K562 (cell line): ENCODE measurements at regions of chr1 and their contacts with region 1.

Region 1: DNA sequence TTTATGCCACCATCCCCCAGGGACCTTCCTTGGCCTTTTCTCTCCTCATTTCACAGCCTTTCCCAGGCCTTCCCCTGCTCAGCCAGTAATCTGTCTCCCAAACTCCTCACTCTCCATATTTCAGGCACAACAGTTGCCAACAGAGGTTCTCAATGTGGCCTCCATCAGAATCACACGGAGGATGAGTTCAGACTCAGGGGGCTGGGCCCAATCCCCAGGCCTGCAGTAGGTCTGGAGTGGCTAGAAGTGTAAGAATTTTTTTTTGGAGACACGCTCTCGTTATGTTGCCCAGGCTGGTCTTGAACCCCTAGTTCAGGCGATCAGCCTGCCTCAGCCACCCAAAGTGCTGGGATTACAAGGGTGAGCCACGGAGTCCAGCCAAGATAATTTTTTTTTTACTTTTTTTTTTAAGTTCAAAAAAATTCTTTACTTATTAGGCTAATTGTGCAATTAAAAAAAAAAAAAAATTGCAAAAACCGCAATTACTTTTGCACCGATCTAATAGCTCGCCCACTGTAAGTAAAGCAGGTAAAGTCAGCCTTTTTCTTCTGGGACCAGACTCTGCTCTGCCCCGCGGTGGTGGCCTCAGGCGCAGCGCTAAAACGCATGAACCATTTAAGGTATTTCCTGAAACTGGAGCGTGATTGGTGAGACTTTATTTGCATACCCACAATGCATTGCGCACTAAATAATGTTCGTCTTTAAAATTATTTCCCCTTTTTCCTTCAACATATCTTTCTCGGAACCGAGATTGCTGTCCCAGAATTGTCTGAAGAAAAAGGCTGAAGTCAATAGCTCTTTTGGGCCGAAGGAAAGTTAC is 18.7 kb downstream of the KIAA2013 start:
- DNase-seq: peak; percentile 86 to 98 (median 90)
- ATAC-seq: peak; percentile 72
- H3K4me3 ChIP-seq: no peak overlapping the region
- H3K27ac ChIP-seq: peak overlapping the region; percentile 100
- H3K4me1 ChIP-seq: peaks cover 15 to 27% of the 10 kb centered on the region in 2 experiments
- H3K27me3 ChIP-seq: no peaks in the 10 kb centered on the region
- CTCF ChIP-seq: peak; percentile 87 to 98 (median 96)
- EP300 ChIP-seq: no peak
- POLR2A ChIP-seq: no peak
- RAD21 ChIP-seq: peak; percentile 61 to 78

Region 2: DNA sequence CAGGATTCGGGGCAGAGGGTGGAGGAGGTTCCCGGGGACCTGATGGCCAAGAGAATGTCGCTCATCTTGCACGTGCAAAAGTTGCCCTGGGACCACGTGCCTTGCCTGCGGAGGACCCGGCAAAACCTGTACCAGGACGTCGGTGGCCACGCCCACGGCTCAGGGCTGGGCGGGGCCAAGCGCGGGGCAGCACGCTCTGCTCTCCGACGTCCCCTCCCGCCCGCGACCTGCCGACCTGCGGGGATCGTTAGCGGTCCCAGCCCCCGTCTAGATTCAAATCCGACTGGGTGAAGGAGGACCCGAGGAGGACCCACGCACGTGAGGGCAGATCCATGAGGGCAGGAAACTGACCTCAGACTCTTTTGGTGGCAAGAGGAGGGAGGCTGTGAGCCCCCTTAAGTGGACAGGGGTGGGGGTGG is 145.5 kb before region 1 on chr1 and contains the start of gene C1orf167:
- CTCF ChIA-PET with region 1: no interaction called
- POLR2A ChIA-PET with region 1: interaction called, 18 read pairs
- in situ Hi-C with region 1: no loop called
- intact Hi-C with region 1: no loop called
- DNase-seq: peak; percentile 80 to 92 (median 86)
- ATAC-seq: peak; percentile 94
- H3K4me3 ChIP-seq: peak within 1 kb of the TSS; percentile 27; the same call in 1 of the 2 replicates
- H3K27ac ChIP-seq: no peak within 1 kb of the TSS; the same call in 2 of the 3 replicates
- H3K4me1 ChIP-seq: peaks cover 8 to 42% of the 10 kb centered on the region in 2 experiments; a peak in 3 of 5 replicates
- H3K27me3 ChIP-seq: no peaks in the 10 kb centered on the region
- CTCF ChIP-seq: no peak
- EP300 ChIP-seq: no peak
- POLR2A ChIP-seq: no peak
- RAD21 ChIP-seq: no peak
- polyA plus RNA-seq, gene C1orf167: not detected

Region 3: DNA sequence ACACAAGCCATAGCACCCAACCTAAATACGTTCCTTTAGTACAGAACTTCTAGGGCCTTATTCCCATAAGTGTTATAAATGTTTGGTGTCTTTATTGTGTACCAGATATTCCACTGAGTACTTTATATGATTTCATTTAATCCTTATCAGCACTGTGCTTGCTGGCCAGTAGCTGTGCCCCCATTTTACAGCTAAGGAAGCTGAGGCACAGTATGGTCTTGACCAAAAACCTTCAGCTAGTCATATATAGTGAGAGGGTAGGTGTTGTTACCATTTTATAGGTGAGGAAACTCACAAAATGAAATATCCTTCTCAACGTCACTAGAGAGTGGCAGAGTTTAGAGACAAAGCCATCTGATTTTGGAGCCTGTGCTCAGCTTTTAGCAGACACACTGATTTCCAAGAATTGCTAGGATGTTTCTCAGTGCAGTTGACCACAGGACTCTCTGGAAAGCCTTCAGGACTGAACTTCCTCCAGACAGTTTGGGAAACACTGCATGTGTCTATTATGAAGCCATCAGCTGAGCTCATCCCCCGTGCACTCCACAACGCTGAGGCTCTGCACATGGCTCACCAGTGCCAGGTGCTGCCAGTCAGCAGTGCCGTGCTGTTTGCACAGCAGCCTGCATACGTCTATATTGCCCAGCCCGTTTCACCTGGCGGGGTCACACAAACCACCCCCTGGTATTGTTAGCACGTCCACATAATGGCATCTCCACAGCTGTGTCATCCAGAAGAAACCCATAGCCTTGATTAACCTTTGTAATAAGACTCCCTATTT is 75.3 kb before region 1 on chr1:
- CTCF ChIA-PET with region 1: no interaction called
- POLR2A ChIA-PET with region 1: interaction called, 304 read pairs
- in situ Hi-C with region 1: no loop called
- intact Hi-C with region 1: no loop called
- DNase-seq: peak in 1 of 4 experiments; percentile 23
- ATAC-seq: peak; percentile 37
- H3K4me3 ChIP-seq: no peak overlapping the region
- H3K27ac ChIP-seq: no peak overlapping the region
- H3K4me1 ChIP-seq: peaks cover 3 to 7% of the 10 kb centered on the region in 2 experiments; a peak in 1 of 5 replicates
- H3K27me3 ChIP-seq: no peaks in the 10 kb centered on the region
- CTCF ChIP-seq: no peak
- EP300 ChIP-seq: no peak
- POLR2A ChIP-seq: no peak
- RAD21 ChIP-seq: no peak

Region 4: DNA sequence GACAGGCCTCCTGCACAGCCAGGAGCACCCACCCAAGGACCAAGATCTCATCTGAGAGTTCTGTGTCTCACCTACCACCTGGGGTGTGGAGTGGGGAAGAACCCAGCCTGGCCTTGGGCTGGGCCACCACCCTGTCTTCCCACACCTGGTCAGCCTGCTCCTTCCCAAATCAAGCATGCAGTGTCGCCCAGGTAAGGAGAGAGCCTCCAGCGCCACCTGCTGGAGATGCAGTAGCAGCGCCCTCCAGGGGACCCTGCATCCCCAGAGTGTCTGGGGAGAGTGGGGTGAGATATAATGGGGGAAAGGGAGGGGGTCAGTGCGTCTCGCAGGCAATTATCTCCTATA is 13.6 kb before region 1 on chr1:
- CTCF ChIA-PET with region 1: interaction called, 3 read pairs
- POLR2A ChIA-PET with region 1: interaction called, 93 read pairs
- in situ Hi-C with region 1: no loop called
- intact Hi-C with region 1: no loop called
- DNase-seq: peak; percentile 88 to 94 (median 93)
- ATAC-seq: peak; percentile 98
- H3K4me3 ChIP-seq: no peak overlapping the region
- H3K27ac ChIP-seq: no peak overlapping the region
- H3K4me1 ChIP-seq: peaks cover 6 to 24% of the 10 kb centered on the region in 2 experiments; a peak in 4 of 5 replicates
- H3K27me3 ChIP-seq: peaks cover 8 to 9% of the 10 kb centered on the region in 2 experiments; a peak in 4 of 5 replicates
- CTCF ChIP-seq: peak; percentile 97 to 99 (median 98)
- EP300 ChIP-seq: no peak
- POLR2A ChIP-seq: no peak
- RAD21 ChIP-seq: peak; percentile 97 to 100

Region 5: GRCh38 chr1:11967028-11967547 is 59.6 kb after region 1 on chr1:
- CTCF ChIA-PET with region 1: interaction called, 3 read pairs
- POLR2A ChIA-PET with region 1: interaction called, 112 read pairs
- in situ Hi-C with region 1: loop called (anchors 5 kb)
- intact Hi-C with region 1: loop called (anchors 1 kb)
- DNase-seq: peak; percentile 50 to 77 (median 64)
- ATAC-seq: peak; percentile 95
- H3K4me3 ChIP-seq: no peak overlapping the region
- H3K27ac ChIP-seq: no peak overlapping the region
- H3K4me1 ChIP-seq: peaks cover 0 to 17% of the 10 kb centered on the region in 2 experiments; a peak in 2 of 5 replicates
- H3K27me3 ChIP-seq: no peaks in the 10 kb centered on the region
- CTCF ChIP-seq: peak; percentile 75 to 95 (median 92)
- EP300 ChIP-seq: no peak
- POLR2A ChIP-seq: no peak
- RAD21 ChIP-seq: peak; percentile 67 to 91

Region 6: GRCh38 chr1:12040457-12041051 is 133.1 kb after region 1 on chr1:
- CTCF ChIA-PET with region 1: no interaction called
- POLR2A ChIA-PET with region 1: interaction called, 95 read pairs
- in situ Hi-C with region 1: no loop called
- intact Hi-C with region 1: loop called (anchors 2 kb)
- DNase-seq: peak in 3 of 4 experiments; percentile 37 to 73 (median 59)
- ATAC-seq: peak; percentile 16; the same call in 2 of the 3 replicates
- H3K4me3 ChIP-seq: no peak overlapping the region
- H3K27ac ChIP-seq: no peak overlapping the region
- H3K4me1 ChIP-seq: peaks cover 47 to 48% of the 10 kb centered on the region in 2 experiments
- H3K27me3 ChIP-seq: no peaks in the 10 kb centered on the region
- CTCF ChIP-seq: no peak
- EP300 ChIP-seq: no peak; the same call in 1 of the 2 replicates
- POLR2A ChIP-seq: no peak
- RAD21 ChIP-seq: 0 out of 4 replicates have a peak, but pooled peaks of 1 of the 2 experiments have one; percentile 19

Region 7: GRCh38 chr1:12275369-12275768 is 367.9 kb after region 1 on chr1:
- CTCF ChIA-PET with region 1: no interaction called
- POLR2A ChIA-PET with region 1: no interaction called
- in situ Hi-C with region 1: no loop called
- intact Hi-C with region 1: no loop called
- DNase-seq: peak; percentile 60 to 67 (median 65)
- ATAC-seq: peak; percentile 88
- H3K4me3 ChIP-seq: no peak overlapping the region
- H3K27ac ChIP-seq: no peak overlapping the region
- H3K4me1 ChIP-seq: no peaks in the 10 kb centered on the region
- H3K27me3 ChIP-seq: no peaks in the 10 kb centered on the region; a peak in 1 of 5 replicates
- CTCF ChIP-seq: peak; percentile 81 to 89 (median 86)
- EP300 ChIP-seq: no peak
- POLR2A ChIP-seq: no peak
- RAD21 ChIP-seq: peak; percentile 21 to 59